ENCODE measurements at regions of chr3 and their contacts with region 1.

Region 1: GRCh38 chr3:110314512-110315114 is 757.0 kb upstream of the NECTIN3 start:
- DNase-seq: peak; percentile 80
- H3K4me3 Mint-ChIP-seq: no peak overlapping the region
- H3K27ac Mint-ChIP-seq: no peak overlapping the region
- H3K4me1 Mint-ChIP-seq: no peaks in the 10 kb centered on the region
- H3K27me3 Mint-ChIP-seq: no peaks in the 10 kb centered on the region
- CTCF ChIP-seq: peak; percentile 64

Region 2: GRCh38 chr3:109532257-109533216 is 782.1 kb before region 1 on chr3:
- CTCF ChIA-PET with region 1: interaction called, 26 read pairs
- POLR2A ChIA-PET with region 1: no interaction called
- intact Hi-C with region 1: loop called (anchors 5 kb)
- DNase-seq: peak; percentile 87
- H3K4me3 Mint-ChIP-seq: no peak overlapping the region
- H3K27ac Mint-ChIP-seq: no peak overlapping the region
- H3K4me1 Mint-ChIP-seq: no peaks in the 10 kb centered on the region
- H3K27me3 Mint-ChIP-seq: no peaks in the 10 kb centered on the region
- CTCF ChIP-seq: peak; percentile 57

Region 3: DNA sequence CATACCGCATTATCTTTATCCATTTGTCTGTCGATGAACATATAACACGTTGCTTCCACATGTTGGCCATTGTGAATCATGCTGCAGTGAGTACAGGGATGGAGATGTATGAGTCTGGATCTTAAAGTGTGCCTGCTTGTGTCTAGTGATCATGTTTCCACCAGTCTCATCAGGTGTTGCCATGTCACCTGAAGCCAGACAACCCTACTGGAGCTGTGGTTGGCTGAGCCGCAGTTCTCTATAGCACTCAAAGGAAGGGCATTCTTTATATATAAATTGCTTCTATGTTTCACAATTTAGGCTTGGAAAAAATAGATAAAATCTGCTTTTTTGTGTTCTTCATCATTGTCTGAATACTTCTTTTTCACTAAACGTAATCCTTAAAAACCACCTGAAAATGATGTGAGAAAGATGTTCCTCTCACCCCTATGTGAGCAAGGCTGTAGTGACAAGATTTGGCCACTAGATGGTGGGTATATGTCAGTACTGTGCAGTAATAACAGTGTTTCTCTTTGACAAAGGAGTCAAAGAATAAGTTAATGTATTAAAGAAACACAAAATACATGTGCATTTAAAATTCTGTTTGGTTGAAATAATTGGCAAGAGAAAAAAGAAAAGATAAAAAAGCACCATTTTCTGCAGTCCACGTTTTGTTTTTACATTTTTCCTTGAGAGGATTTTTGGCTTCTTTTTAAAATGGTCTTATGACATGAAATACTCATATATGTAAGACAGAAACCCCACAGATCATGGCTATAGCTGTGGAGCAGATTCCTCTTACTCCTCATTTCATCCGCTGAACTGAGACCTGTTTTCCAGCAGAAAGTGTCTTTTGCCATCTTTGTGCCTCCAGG is 582.8 kb before region 1 on chr3:
- CTCF ChIA-PET with region 1: interaction called, 15 read pairs
- POLR2A ChIA-PET with region 1: no interaction called
- intact Hi-C with region 1: loop called (anchors 2 kb)
- DNase-seq: peak; percentile 72
- H3K4me3 Mint-ChIP-seq: no peak overlapping the region
- H3K27ac Mint-ChIP-seq: no peak overlapping the region
- H3K4me1 Mint-ChIP-seq: peaks cover 7% of the 10 kb centered on the region
- H3K27me3 Mint-ChIP-seq: no peaks in the 10 kb centered on the region
- CTCF ChIP-seq: peak; percentile 85

Region 4: DNA sequence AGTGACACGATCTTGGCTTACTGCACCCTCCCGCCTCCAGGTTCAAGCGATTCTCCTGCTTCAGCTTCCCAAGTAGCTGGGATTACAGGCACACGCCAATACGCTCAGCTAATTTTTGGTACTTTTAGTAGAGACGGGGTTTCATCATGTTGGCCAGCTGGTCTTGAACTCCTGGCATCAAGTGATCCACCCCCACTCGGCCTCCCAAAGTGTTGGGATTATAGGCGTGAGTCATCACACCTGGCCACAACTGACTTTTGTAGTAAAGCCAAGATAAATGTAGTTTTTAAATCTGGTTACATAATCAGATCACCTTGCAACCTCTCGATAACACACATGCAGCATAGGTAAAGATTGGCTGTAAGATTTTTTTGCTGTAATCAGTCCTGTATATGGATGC is 319.8 kb before region 1 on chr3:
- CTCF ChIA-PET with region 1: no interaction called
- POLR2A ChIA-PET with region 1: no interaction called
- intact Hi-C with region 1: no loop called
- DNase-seq: peak; percentile 86
- H3K4me3 Mint-ChIP-seq: no peak overlapping the region
- H3K27ac Mint-ChIP-seq: no peak overlapping the region
- H3K4me1 Mint-ChIP-seq: no peaks in the 10 kb centered on the region
- H3K27me3 Mint-ChIP-seq: no peaks in the 10 kb centered on the region
- CTCF ChIP-seq: no peak

Region 5: DNA sequence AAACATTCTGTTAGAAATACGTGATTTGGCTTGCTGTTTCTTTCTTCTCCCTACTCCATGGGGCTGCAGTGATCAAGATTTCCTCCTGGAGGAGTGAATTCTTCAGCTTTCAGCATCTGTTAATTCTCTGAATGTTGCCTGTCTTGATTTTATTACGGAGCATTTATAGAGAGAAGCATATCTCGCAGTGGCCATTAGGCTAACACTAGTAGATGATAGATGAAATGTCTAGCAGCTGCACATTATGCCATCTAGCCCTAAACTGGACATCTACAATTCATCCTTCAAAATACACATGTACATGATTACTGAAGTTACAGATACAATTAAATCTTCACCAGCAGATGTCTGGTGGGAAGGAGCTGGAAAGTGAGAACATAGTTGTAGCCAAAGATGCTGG is 12.8 kb before region 1 on chr3:
- CTCF ChIA-PET with region 1: interaction called, 22 read pairs
- POLR2A ChIA-PET with region 1: interaction called, 3 read pairs
- intact Hi-C with region 1: no loop called
- DNase-seq: no peak
- H3K4me3 Mint-ChIP-seq: no peak overlapping the region
- H3K27ac Mint-ChIP-seq: no peak overlapping the region
- H3K4me1 Mint-ChIP-seq: no peaks in the 10 kb centered on the region
- H3K27me3 Mint-ChIP-seq: no peaks in the 10 kb centered on the region
- CTCF ChIP-seq: no peak

Region 6: DNA sequence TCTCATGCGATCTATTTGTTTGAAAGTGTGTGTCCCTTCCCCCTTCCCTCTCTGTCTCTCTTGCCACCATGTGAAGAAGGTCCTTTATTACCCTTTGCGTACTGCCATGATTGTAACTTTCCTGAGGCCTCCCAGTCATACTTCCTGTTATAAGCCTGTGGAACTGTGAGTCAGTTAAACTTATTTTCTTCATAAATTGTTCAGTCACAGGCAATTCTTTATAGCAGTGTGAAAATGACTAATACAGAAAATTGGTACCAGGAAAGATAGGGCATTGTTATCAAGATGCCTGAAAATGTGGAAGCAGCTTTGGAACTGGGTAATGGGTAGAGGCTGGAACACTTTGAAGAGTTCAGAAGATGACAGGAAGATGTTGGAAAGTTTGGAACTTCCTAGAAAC is 13.3 kb after region 1 on chr3:
- CTCF ChIA-PET with region 1: interaction called, 31 read pairs
- POLR2A ChIA-PET with region 1: no interaction called
- intact Hi-C with region 1: no loop called
- DNase-seq: no peak
- H3K4me3 Mint-ChIP-seq: no peak overlapping the region
- H3K27ac Mint-ChIP-seq: no peak overlapping the region
- H3K4me1 Mint-ChIP-seq: no peaks in the 10 kb centered on the region
- H3K27me3 Mint-ChIP-seq: no peaks in the 10 kb centered on the region
- CTCF ChIP-seq: no peak

Region 7: GRCh38 chr3:110420158-110420641 is 105.6 kb after region 1 on chr3:
- CTCF ChIA-PET with region 1: interaction called, 3 read pairs
- POLR2A ChIA-PET with region 1: no interaction called
- intact Hi-C with region 1: loop called (anchors 2 kb)
- DNase-seq: peak; percentile 69
- H3K4me3 Mint-ChIP-seq: no peak overlapping the region
- H3K27ac Mint-ChIP-seq: peak overlapping the region; percentile 82
- H3K4me1 Mint-ChIP-seq: peaks cover 15% of the 10 kb centered on the region
- H3K27me3 Mint-ChIP-seq: no peaks in the 10 kb centered on the region
- CTCF ChIP-seq: no peak